A549 (cell line): ENCODE measurements at regions of chr9 and their contacts with region 1.

Region 1: DNA sequence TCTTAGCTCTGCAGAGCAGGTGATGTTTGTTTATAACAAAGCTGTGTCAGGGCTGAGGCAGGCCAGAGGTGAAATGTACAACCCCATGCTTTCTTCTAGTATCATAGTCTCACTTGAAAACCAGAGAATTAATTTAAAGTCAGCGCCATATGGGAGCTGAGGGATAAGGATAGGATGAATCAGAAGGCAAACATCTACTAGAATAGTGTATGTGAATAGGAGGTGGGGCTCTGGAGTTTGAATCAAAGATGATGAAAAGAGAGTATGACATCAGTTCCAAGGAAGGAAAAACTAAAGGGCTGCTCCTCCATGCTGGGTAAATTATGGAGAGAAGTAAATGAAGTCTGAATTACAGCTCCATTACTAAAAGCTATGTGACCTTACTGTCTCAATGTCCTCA is 441.5 kb downstream of the RASEF start:
- DNase-seq: no peak
- ATAC-seq: no peak
- H3K4me3 ChIP-seq: no peak overlapping the region
- H3K27ac ChIP-seq: no peak overlapping the region
- H3K4me1 ChIP-seq: no peaks in the 10 kb centered on the region
- CTCF ChIP-seq: no peak
- EP300 ChIP-seq: no peak
- POLR2A ChIP-seq: no peak
- RAD21 ChIP-seq: no peak

Region 2: DNA sequence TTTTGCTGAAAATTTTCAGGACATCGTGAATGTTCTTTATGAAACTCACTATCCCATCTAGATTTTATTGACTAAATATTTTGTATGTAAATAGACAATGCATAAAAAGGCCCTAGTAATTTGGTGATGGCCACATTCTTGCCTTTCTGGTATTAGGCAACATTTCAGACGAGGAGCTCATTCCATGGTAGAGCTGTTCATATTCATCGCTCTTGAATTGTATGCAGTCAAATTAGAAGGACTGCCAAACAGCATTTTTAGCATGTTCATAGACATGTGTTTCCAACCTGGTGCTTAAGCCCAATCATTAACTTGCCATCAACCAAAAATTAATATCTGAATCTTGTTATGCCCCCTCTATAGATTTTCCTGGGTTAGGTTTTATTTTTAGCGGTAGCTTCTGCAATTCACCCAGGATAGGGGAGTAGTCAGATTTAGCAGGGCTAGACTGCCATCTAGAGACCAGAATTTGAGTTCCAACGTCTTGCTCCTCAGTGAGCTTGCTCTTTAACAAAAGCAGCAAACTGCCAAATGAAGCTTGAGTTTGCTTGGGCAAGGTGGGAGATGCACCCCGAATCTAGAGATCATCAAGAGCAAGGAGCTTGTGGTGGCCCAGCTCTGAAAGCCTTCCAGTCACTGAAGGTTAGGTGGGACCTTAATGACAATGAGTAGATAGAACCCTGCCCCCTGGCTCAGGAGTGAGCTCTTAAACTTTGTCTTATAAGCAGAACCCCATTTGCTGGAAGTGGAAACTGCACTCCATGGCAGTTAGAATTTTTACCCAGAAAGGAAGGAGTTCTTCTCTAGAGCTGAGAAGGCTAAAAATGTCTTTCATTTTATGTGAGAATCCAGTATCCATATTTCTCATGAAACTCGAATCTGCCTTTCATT is 14.7 kb before region 1 on chr9:
- CTCF ChIA-PET with region 1: interaction called, 39 read pairs
- POLR2A ChIA-PET with region 1: no interaction called
- DNase-seq: peak; percentile 32 to 65
- ATAC-seq: peak; percentile 92 to 94
- H3K4me3 ChIP-seq: no peak overlapping the region
- H3K27ac ChIP-seq: no peak overlapping the region
- H3K4me1 ChIP-seq: 0 out of 3 replicates have a peak, but pooled peaks cover 5% of the 10 kb centered on the region
- CTCF ChIP-seq: peak; percentile 73
- EP300 ChIP-seq: no peak
- POLR2A ChIP-seq: no peak
- RAD21 ChIP-seq: peak; percentile 84 to 87

Region 3: GRCh38 chr9:82706786-82707185 is 85.3 kb after region 1 on chr9:
- CTCF ChIA-PET with region 1: no interaction called
- POLR2A ChIA-PET with region 1: no interaction called
- DNase-seq: peak in 1 of 2 experiments; percentile 10
- ATAC-seq: 0 out of 6 replicates have a peak, but pooled peaks of 1 of the 2 experiments have one; percentile 13
- H3K4me3 ChIP-seq: no peak overlapping the region
- H3K27ac ChIP-seq: no peak overlapping the region
- H3K4me1 ChIP-seq: no peaks in the 10 kb centered on the region
- CTCF ChIP-seq: no peak
- EP300 ChIP-seq: no peak
- POLR2A ChIP-seq: no peak
- RAD21 ChIP-seq: no peak